ENCODE measurements at regions of chr19 and their contacts with region 1.

Region 1: DNA sequence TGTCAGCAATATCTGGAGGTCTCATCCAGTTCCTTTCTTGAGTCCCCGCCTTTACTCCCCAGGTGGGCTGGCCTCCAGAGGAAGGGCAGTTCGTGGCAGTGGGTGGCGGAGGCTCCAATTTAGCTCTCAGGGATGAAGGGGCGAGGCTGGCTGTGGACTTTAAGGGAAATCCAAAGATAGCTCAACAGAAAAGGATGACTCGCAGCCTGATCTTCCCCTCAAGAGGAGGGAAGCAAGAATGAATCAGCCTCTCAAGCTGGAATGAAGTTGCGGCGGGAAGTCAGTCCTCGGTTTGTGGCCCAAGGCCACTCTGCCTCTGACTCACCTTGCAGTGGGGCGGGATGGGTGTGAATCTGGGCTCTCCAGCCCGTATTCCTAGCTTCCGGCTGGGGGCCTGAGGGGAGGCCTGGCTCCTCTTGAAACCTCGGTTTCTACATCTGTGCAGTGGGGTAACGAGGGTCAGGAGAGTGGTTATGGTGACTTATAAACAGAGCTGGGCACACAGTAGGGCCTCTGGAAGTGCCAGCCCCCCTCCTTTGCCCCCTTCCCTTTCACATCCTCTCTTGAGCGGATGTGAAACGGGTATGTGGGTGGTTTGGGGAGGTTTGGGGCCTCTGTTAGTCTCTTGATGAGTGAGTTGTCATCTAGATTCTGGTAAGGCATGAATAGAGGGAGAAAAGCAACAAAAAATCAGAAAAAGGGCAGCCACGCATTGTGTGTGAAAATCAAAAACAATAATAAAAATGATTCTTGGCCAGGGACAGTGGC is 10.5 kb upstream of the SMG9 start:
- DNase-seq: peak; percentile 59 to 91 (median 63)
- H3K4me3 ChIP-seq: peak overlapping the region in 1 of 2 donors; percentile 25
- H3K4me3 Mint-ChIP-seq: peak overlapping the region; percentile 34 to 75 (median 66)
- H3K27ac ChIP-seq: peak overlapping the region; percentile 50
- H3K27ac Mint-ChIP-seq: peak overlapping the region; percentile 83 to 94 (median 90)
- H3K4me1 ChIP-seq: peaks cover 40% of the 10 kb centered on the region
- H3K4me1 Mint-ChIP-seq: peaks cover 26 to 49% (median 39%) of the 10 kb centered on the region in 4 donors
- H3K27me3 ChIP-seq: no peaks in the 10 kb centered on the region
- H3K27me3 Mint-ChIP-seq: no peaks in the 10 kb centered on the region

Region 2: DNA sequence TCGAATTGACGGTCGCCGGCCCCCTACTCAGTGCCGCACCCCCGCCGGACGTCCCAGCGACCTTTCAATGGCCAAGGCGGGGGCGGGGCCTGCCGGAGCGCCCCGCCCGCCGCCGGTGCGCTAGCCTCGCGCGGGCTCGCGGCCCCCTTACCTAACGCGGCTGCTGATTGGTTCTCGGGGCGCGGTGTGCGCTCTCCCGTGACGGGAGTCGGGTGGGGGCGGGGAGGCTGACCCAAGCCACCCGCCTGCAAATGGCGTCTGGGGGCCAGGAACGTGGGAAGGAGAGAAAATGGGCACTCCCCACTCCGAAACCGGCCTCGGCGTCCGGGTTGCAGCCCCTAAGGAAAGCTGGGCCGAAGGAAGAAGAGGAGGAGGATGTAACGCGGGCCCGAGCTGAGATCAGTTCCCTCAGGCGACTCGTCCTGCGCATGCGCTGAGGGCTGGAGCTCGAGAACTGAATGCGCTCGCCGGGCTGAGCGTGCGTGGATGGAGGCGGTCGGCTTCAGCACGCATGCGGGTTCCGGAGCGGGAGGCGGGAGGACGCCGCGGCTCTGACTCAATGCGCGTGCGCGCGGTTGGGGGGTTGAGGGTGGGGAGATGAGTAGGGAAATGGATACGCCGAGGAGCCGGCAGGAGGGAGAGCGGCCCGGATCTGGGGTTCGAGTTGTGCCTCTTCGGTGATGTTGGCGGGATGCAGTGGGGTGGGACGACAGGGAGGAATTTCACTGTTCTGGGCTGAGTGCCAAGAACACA is 10.6 kb before region 1 on chr19 and contains the start of gene SMG9:
- CTCF ChIA-PET with region 1: interaction called, 80 read pairs
- POLR2A ChIA-PET with region 1: interaction called, 116 read pairs
- intact Hi-C with region 1: loop called (anchors 1 kb)
- DNase-seq: peak; percentile 98 to 100 (median 99)
- H3K4me3 ChIP-seq: peak within 1 kb of the TSS; percentile 94 to 98
- H3K4me3 Mint-ChIP-seq: peak within 1 kb of the TSS; percentile 90 to 97 (median 96)
- H3K27ac ChIP-seq: peak within 1 kb of the TSS; percentile 93
- H3K27ac Mint-ChIP-seq: peak within 1 kb of the TSS; percentile 96 to 99 (median 99)
- H3K4me1 ChIP-seq: peaks cover 38% of the 10 kb centered on the region
- H3K4me1 Mint-ChIP-seq: peaks cover 22 to 63% (median 41%) of the 10 kb centered on the region in 4 donors
- H3K27me3 ChIP-seq: no peaks in the 10 kb centered on the region
- H3K27me3 Mint-ChIP-seq: no peaks in the 10 kb centered on the region
- total RNA-seq, gene SMG9: 57.6 to 57.9 TPM

Region 3: GRCh38 chr19:43777163-43777700 is 11.9 kb after region 1 on chr19:
- CTCF ChIA-PET with region 1: interaction called, 94 read pairs
- POLR2A ChIA-PET with region 1: interaction called, 104 read pairs
- intact Hi-C with region 1: loop called (anchors 1 kb)
- DNase-seq: peak; percentile 40 to 81 (median 57)
- H3K4me3 ChIP-seq: no peak overlapping the region
- H3K4me3 Mint-ChIP-seq: peak overlapping the region; percentile 67 to 92 (median 87)
- H3K27ac ChIP-seq: peak overlapping the region; percentile 67
- H3K27ac Mint-ChIP-seq: peak overlapping the region; percentile 85 to 99 (median 91)
- H3K4me1 ChIP-seq: peaks cover 67% of the 10 kb centered on the region
- H3K4me1 Mint-ChIP-seq: peaks cover 42 to 73% (median 57%) of the 10 kb centered on the region in 4 donors
- H3K27me3 ChIP-seq: no peaks in the 10 kb centered on the region
- H3K27me3 Mint-ChIP-seq: no peaks in the 10 kb centered on the region

Region 4: GRCh38 chr19:43842007-43842406 is 76.7 kb after region 1 on chr19:
- CTCF ChIA-PET with region 1: no interaction called
- POLR2A ChIA-PET with region 1: no interaction called
- intact Hi-C with region 1: no loop called
- DNase-seq: no peak
- H3K4me3 ChIP-seq: peak overlapping the region in 1 of 2 donors; percentile 0
- H3K4me3 Mint-ChIP-seq: no peak overlapping the region
- H3K27ac ChIP-seq: no peak overlapping the region
- H3K27ac Mint-ChIP-seq: no peak overlapping the region
- H3K4me1 ChIP-seq: no peaks in the 10 kb centered on the region
- H3K4me1 Mint-ChIP-seq: peaks cover 0 to 3% (median 0%) of the 10 kb centered on the region in 4 donors
- H3K27me3 ChIP-seq: no peaks in the 10 kb centered on the region
- H3K27me3 Mint-ChIP-seq: no peaks in the 10 kb centered on the region